HepG2 (cell line): ENCODE measurements at regions of chr6 and their contacts with region 1.

Region 1: DNA sequence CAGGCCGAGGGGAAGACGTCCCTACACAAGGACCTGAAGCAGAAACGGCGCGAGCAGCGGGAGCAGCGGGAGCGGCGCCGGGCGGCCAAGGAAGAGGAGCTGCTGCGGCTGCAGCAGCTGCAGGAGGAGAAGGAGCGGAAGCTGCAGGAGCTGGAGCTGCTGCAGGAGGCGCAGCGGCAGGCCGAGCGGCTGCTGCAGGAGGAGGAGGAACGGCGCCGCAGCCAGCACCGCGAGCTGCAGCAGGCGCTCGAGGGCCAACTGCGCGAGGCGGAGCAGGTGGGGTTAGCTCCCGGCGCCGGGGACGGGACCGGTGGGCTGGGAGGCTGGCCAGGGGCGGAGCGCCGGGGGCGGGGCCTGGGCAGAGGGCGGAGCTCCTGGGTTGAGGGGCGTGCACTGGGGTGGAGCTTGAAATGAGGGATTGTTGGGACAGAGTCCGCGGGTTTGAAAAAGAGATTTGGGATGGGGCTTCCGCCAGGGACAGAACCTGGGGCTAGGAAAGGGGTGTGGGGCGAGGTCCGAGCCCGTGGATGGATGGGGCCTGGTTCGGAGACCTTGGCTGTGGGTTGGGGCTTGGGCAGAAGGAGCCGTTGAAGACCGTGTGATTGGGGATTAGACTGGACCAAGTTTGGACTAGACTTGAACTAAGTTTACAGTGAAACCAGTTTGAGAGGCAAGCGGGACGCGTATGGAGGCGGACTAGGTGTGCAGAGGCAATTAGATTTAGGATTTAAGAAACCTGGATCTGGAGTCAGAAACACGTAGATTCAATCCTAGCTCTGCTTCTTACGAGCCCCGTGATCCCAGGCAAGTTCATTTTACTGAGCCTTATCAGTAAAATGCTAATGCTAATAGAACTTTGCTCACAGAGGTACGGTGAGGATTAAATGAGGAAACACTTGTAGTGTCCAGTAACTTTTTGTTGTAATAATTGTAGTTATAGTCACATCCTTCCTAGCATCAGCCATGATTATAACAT is 20.9 kb downstream of the DEF6 start:
- DNase-seq: peak; percentile 86
- ATAC-seq: peak; percentile 98
- H3K4me3 ChIP-seq: peak overlapping the region; percentile 58 to 81 (median 61)
- H3K27ac ChIP-seq: peak overlapping the region; percentile 70
- H3K4me1 ChIP-seq: peaks cover 20% of the 10 kb centered on the region
- H3K27me3 ChIP-seq: no peaks in the 10 kb centered on the region
- CTCF ChIP-seq: peak; percentile 63
- EP300 ChIP-seq: peak; percentile 32 to 62; a peak in 1 of 4 replicates
- POLR2A ChIP-seq: peak; percentile 76 to 78
- RAD21 ChIP-seq: peak; percentile 45

Region 2: GRCh38 chr6:35259194-35259947 is 59.1 kb before region 1 on chr6 and contains the start of gene ZNF76:
- CTCF ChIA-PET with region 1: no interaction called
- POLR2A ChIA-PET with region 1: interaction called, 12 read pairs
- in situ Hi-C with region 1: no loop called
- intact Hi-C with region 1: no loop called
- DNase-seq: peak; percentile 96
- ATAC-seq: peak; percentile 90
- H3K4me3 ChIP-seq: peak within 1 kb of the TSS; percentile 69 to 97 (median 77)
- H3K27ac ChIP-seq: peak within 1 kb of the TSS; percentile 93
- H3K4me1 ChIP-seq: peaks cover 51% of the 10 kb centered on the region
- H3K27me3 ChIP-seq: no peaks in the 10 kb centered on the region; a peak in 1 of 5 replicates
- CTCF ChIP-seq: no peak; the same call in 1 of the 2 replicates
- EP300 ChIP-seq: peak; percentile 13 to 68; a peak in 3 of 4 replicates
- POLR2A ChIP-seq: peak in 1 of 2 experiments; percentile 73; a peak in 2 of 4 replicates
- RAD21 ChIP-seq: no peak; the same call in none of the 2 replicates
- total RNA-seq, gene ZNF76: 11.8 and 13.2 TPM in 2 replicates